Stomach (tissue), 19 donors: ENCODE measurements at regions of chr13 and their contacts with region 1.

Region 1: DNA sequence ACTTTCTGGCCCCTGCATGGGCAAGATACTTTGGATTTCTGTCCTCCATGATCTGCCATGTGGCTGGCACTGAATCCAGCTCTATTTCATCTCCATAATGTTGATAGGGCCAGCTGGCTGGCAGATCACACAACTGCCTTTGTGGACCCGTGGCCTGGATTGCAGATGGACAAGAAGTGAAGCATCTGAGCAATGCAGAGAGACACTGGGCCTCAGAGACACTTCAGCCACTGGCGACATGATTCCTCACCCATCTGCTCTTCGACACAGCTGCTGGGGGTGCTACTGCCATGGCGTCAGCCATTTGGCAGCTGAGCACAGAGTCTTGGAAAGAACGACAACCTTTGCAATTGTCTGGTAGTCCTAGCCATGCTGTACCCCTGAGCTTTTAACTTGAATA is 79.5 kb upstream of the MYO16 start:
- DNase-seq: no peak
- H3K4me3 ChIP-seq: no peak overlapping the region
- H3K27ac ChIP-seq: no peak overlapping the region
- H3K4me1 ChIP-seq: no peaks in the 10 kb centered on the region
- H3K27me3 ChIP-seq: no peaks in the 10 kb centered on the region
- CTCF ChIP-seq: no peak
- EP300 ChIP-seq: no peak
- POLR2A ChIP-seq: no peak

Region 2: DNA sequence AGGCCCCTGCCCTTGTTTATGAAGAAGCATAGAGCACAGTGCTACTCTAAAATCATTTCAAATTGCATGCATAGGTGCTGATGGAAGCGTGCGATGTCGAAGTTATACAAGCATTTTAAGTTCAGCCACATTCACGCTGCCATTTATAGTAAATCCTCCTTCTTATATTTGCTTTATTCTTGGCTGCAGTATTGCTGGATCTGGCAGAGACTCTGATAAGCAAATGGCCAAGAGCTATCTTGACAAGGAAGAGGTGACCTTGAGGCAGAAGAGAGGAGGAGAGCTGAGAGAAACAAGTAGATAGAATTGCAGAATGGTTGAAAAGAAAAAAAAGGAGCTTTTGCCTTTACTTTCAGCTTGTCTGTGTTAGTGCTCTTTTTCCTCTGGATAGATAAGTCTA is 60.6 kb after region 1 on chr13:
- intact Hi-C with region 1: no loop called
- DNase-seq: no peak
- H3K4me3 ChIP-seq: no peak overlapping the region
- H3K27ac ChIP-seq: no peak overlapping the region
- H3K4me1 ChIP-seq: peaks cover 0 to 4% (median 0%) of the 10 kb centered on the region in 4 donors
- H3K27me3 ChIP-seq: no peaks in the 10 kb centered on the region
- CTCF ChIP-seq: no peak
- EP300 ChIP-seq: no peak
- POLR2A ChIP-seq: no peak

Region 3: GRCh38 chr13:108621462-108621861 is 71.5 kb after region 1 on chr13:
- intact Hi-C with region 1: no loop called
- DNase-seq: no peak
- H3K4me3 ChIP-seq: no peak overlapping the region
- H3K27ac ChIP-seq: no peak overlapping the region
- H3K4me1 ChIP-seq: no peaks in the 10 kb centered on the region
- H3K27me3 ChIP-seq: no peaks in the 10 kb centered on the region
- CTCF ChIP-seq: no peak
- EP300 ChIP-seq: no peak
- POLR2A ChIP-seq: no peak

Region 4: DNA sequence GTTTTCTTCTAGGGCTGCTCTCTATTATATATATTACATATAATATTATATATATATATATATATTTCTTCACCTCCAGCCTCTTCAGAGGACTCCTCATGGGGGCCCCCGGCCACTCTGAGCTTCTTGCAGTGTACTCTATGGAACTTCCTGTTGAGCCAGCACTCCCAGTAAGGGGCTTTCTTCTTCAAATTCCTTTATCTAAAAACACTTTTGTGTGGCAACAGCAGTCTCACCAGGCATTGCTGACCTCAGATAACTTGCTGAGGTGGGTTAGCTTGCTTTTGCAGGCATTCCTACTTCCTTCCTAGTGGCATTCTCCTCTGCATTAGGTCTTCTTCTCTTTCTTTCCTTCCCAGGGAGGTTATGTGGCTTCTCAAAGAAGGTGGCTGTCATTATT is 461.0 kb after region 1 on chr13:
- intact Hi-C with region 1: loop called (anchors 10 kb)
- DNase-seq: no peak
- H3K4me3 ChIP-seq: no peak overlapping the region
- H3K27ac ChIP-seq: no peak overlapping the region
- H3K4me1 ChIP-seq: no peaks in the 10 kb centered on the region
- H3K27me3 ChIP-seq: no peaks in the 10 kb centered on the region
- CTCF ChIP-seq: no peak
- EP300 ChIP-seq: no peak
- POLR2A ChIP-seq: no peak